ENCODE measurements at regions of chr2 and their contacts with region 1.

Region 1: GRCh38 chr2:152175458-152176325 is at the start of gene STAM2:
- DNase-seq: peak; percentile 88
- H3K4me3 ChIP-seq: peak within 1 kb of the TSS; percentile 97
- H3K27ac ChIP-seq: peak within 1 kb of the TSS; percentile 94
- H3K27me3 ChIP-seq: no peaks in the 10 kb centered on the region
- CTCF ChIP-seq: peak; percentile 97

Region 2: DNA sequence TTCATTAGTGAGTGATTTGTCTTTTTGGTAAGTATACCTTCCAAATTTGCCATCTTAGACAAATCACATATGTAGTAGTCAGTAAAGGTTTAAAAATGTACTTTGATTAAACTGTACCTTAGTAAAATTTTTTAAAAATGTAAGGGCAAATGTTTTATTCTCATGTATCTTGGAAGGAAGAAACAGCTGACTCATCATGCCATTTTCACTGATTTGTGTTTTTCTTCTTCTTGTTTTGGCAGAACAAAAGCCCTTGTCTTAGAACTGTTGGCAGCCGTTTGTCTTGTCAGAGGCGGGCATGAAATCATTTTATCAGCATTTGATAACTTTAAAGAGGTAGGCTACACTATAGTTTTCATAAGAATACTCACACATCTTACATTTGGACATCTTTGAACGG is 405.0 kb after region 1 on chr2:
- in situ Hi-C with region 1: no loop called
- DNase-seq: no peak
- H3K4me3 ChIP-seq: no peak overlapping the region
- H3K27ac ChIP-seq: no peak overlapping the region
- H3K27me3 ChIP-seq: no peaks in the 10 kb centered on the region
- CTCF ChIP-seq: no peak

Region 3: GRCh38 chr2:152635635-152636298 is 460.1 kb after region 1 on chr2:
- in situ Hi-C with region 1: loop called (anchors 25 kb)
- DNase-seq: peak; percentile 43
- H3K4me3 ChIP-seq: no peak overlapping the region
- H3K27ac ChIP-seq: no peak overlapping the region
- H3K27me3 ChIP-seq: no peaks in the 10 kb centered on the region
- CTCF ChIP-seq: peak; percentile 86

Measured in brain microvascular endothelial cell (primary cell).